ENCODE measurements at regions of chr16 and their contacts with region 1.

Region 1: DNA sequence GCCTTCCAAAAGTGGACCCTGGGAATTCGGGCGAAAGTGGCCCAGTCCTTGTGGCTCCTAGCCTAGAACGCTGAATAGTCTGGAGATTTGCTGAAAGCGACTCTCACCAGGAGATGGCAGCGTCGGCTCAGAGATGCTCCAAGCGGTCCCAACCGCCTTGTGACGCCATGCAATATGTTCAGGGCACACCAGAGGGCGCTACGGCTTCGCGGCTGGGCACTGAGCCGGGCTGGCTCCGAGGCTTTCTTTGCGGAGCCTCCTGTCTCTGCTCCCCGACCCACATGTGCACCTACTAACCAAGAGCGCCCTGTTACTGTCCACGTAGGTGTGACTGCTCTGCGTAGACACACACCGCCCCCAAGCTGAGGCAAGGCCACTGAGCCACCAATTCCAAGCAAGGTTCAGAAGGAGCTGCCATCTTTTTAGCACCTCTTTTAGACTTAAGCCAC is 36.9 kb downstream of the SYCE1L start:
- DNase-seq: peak; percentile 90
- ATAC-seq: peak; percentile 100

Region 2: GRCh38 chr16:77584205-77584859 is 348.2 kb after region 1 on chr16:
- intact Hi-C with region 1: loop called (anchors 2 kb)
- DNase-seq: no peak
- ATAC-seq: peak; percentile 63

Region 3: GRCh38 chr16:77657016-77657415 is 420.9 kb after region 1 on chr16:
- intact Hi-C with region 1: loop called (anchors 10 kb)
- DNase-seq: no peak
- ATAC-seq: no peak